BJ (cell line): ENCODE measurements at regions of chr12 and their contacts with region 1.

Region 1: GRCh38 chr12:89494411-89495231 is 30.0 kb downstream of the GALNT4 start:
- DNase-seq: no peak
- H3K4me3 ChIP-seq: no peak overlapping the region
- H3K27me3 ChIP-seq: no peaks in the 10 kb centered on the region
- CTCF ChIP-seq: no peak

Region 2: DNA sequence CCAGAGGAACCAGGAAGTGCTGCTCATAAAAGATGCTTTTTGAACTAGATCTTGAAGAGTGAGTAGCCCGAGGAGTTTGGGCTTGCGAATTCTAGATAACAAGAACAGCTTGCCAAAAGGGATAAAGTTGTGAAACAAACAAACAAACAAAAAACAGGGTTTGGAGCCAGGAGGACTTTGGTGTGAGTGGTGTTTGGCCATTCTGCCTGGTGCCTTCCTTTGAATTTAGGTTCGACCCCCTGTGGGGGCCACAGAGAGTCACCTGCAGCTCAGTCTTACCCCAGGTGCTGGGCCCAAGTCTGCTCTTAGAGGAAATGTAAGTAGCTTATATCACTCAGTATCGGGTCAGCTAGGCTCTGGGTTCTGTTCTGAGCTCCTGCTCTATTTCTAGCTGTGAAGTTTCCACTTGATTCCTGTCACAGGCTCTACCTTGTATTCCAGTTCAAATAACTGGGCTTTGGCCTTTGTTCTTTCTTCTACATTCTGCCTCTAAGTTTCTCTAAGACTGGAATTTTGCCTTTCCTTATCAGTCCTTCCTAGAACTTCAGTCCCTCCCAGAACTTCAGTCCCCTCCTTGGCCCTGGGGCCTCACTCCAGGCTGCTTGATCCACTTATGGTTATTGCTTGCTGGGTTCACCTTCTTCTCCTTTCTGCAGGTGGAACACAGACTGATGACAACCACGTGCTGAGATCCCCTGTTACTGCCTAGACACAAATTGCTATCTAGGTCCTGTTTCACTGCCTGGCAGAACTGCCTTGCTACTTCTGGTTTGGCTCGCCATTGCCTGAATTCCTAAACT is 121.8 kb before region 1 on chr12:
- CTCF ChIA-PET with region 1: no interaction called
- POLR2A ChIA-PET with region 1: interaction called, 14 read pairs
- DNase-seq: no peak
- H3K4me3 ChIP-seq: no peak overlapping the region
- H3K27me3 ChIP-seq: no peaks in the 10 kb centered on the region
- CTCF ChIP-seq: no peak